Heart left ventricle (tissue), 16 donors: ENCODE measurements at regions of chr6 and their contacts with region 1.

Region 1: GRCh38 chr6:163427498-163428254 is 13.2 kb downstream of the QKI start:
- DNase-seq: no peak
- ATAC-seq: peak in 2 of 4 donors; percentile 33 to 43
- H3K4me3 ChIP-seq: peak overlapping the region in 4 of 12 donors; percentile 2 to 10 (median 6)
- H3K27ac ChIP-seq: peak overlapping the region in 7 of 12 donors; percentile 4 to 49 (median 16)
- H3K4me1 ChIP-seq: peaks cover 27 to 100% (median 93%) of the 10 kb centered on the region in 12 donors
- H3K27me3 ChIP-seq: no peaks in the 10 kb centered on the region
- CTCF ChIP-seq: peak; percentile 18 to 64 (median 50)
- POLR2A ChIP-seq: no peak

Region 2: DNA sequence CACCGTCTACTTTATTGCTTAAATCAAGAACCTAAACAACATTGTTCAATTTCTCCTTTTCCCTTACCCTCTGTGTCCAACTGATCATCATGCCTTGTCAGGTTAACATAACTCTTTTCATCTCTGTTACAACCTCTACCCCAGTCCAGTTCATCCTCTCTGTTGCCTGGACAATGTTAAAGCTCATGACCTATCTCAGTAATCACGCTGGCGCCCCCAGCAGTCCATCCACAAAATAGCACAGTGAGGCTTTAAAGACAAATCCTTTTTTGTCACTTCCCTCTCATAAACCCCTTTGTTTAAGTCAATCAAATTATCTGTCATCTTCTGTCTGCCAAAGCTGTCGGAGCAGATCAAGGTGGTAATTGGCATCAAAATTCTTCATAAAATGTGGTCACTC is 127.0 kb after region 1 on chr6:
- intact Hi-C with region 1: loop called in 3 of 10 experiments (anchors 10 kb)
- DNase-seq: peak in 3 of 5 donors; percentile 23 to 65 (median 53)
- ATAC-seq: peak in 3 of 4 donors; percentile 46 to 56 (median 48)
- H3K4me3 ChIP-seq: no peak overlapping the region
- H3K27ac ChIP-seq: peak overlapping the region in 2 of 12 donors; percentile 2 to 22
- H3K4me1 ChIP-seq: peaks cover 0 to 57% (median 28%) of the 10 kb centered on the region in 12 donors
- H3K27me3 ChIP-seq: no peaks in the 10 kb centered on the region
- CTCF ChIP-seq: peak; percentile 20 to 59 (median 44)
- POLR2A ChIP-seq: no peak

Region 3: DNA sequence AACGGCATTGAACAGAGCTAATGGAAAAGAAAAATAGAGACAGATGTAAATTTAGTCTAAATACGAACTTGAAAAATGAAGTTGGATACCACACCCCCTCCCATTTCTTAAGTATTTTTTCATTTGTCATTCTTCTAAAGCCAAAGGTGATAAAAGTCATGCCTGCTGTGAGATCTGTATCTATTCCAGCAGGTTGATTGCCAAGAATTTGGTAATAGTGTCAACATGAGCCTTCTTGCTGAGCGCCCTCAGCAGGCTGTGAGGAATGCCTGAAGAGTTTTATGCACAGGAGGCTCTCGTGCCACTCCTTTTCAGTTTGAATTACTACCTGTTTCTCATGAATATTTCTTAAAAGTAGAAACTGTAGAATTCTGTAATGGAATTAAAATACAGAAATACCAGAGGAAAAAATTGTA is 152.2 kb after region 1 on chr6:
- intact Hi-C with region 1: loop called in 4 of 10 experiments (anchors 5 to 10 kb)
- DNase-seq: peak in 1 of 5 donors; percentile 29
- ATAC-seq: peak in 3 of 4 donors; percentile 19 to 44 (median 42)
- H3K4me3 ChIP-seq: no peak overlapping the region
- H3K27ac ChIP-seq: peak overlapping the region in 6 of 12 donors; percentile 3 to 60 (median 32)
- H3K4me1 ChIP-seq: peaks cover 0 to 38% (median 16%) of the 10 kb centered on the region in 12 donors
- H3K27me3 ChIP-seq: no peaks in the 10 kb centered on the region
- CTCF ChIP-seq: peak in 5 of 12 donors; percentile 17 to 32 (median 24)
- POLR2A ChIP-seq: no peak

Region 4: GRCh38 chr6:163745536-163746400 is 318.1 kb after region 1 on chr6:
- intact Hi-C with region 1: loop called in 1 of 10 experiments (anchors 10 kb)
- DNase-seq: peak in 4 of 5 donors; percentile 70 to 89 (median 84)
- ATAC-seq: peak; percentile 94 to 96 (median 95)
- H3K4me3 ChIP-seq: no peak overlapping the region
- H3K27ac ChIP-seq: peak overlapping the region; percentile 32 to 85 (median 78)
- H3K4me1 ChIP-seq: peaks cover 0 to 53% (median 19%) of the 10 kb centered on the region in 12 donors
- H3K27me3 ChIP-seq: no peaks in the 10 kb centered on the region
- CTCF ChIP-seq: no peak
- POLR2A ChIP-seq: no peak

Region 5: DNA sequence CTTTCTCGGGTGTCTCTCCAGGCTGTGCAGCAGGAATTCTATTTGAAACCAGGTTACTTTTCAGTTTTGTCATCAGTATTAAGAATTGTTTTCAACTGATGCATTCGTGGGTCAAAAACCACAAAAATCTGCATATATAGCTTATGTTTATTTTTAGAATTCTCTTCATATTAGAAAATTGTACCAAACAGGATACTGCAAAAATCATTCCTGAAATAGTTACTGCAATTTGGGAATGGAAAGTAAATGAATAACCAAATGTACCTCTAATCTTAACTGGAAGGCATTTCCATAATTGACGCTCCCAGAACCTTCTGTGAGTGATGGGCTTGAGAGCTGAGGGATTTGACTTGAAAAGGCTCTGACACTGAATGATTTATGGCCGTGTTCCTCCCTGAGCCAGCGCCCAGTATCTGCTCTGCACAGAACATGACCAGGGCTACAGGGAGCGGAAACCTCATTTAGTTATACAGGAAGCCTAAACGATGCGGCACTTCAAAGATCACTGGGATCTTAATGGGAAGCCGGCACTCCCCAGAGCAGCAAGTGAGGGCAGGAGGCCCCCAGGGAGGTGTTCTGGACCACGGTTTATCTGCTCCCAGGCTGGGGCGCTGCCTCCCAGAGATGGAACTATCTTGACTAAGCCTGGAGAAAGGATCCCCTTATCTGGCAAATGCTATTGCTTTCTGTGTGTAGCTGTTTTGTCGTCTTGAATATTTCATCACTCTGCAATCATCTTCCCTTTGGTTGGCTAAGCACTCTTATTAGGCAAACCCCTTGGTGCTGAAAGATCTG is 432.8 kb after region 1 on chr6:
- intact Hi-C with region 1: loop called in 1 of 10 experiments (anchors 10 kb)
- DNase-seq: peak in 1 of 5 donors; percentile 42
- ATAC-seq: peak in 3 of 4 donors; percentile 66 to 73 (median 73)
- H3K4me3 ChIP-seq: peak overlapping the region in 9 of 12 donors; percentile 11 to 42 (median 18)
- H3K27ac ChIP-seq: no peak overlapping the region
- H3K4me1 ChIP-seq: peaks cover 0 to 12% (median 6%) of the 10 kb centered on the region in 12 donors
- H3K27me3 ChIP-seq: no peaks in the 10 kb centered on the region
- CTCF ChIP-seq: no peak
- POLR2A ChIP-seq: no peak